Lower leg skin (tissue), 4 donors: ENCODE measurements at regions of chr6 and their contacts with region 1.

Region 1: DNA sequence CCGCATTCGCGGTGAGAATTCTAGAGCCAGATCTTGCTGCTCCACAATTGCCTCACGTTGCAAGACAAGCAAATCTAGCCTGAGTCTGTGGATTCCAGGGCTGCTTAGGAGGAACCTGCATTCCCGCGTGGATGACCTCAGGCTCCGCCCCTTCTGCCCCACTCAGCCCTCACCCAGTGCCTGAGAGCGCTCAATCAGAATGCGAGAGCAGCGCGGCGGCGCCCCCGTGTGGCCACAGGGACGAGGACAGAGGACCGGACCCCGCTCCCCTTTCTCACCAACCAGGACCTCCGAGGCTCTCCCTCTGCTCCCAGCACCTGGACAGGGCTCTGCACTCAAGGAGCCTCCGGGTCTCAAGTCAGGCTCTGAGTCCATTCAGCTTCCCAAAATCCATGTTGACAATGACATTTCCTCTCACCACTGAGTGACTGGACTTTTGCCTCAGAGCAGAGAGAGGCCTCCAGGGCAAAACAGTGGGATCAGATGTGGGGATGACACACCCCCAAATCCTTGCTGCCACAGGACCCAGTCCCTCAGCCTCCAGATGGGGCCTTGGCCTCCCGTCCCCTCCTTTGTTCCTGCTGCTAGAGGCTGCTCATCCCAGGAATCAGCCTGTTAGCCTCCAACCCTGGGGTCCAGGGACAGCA is 52.0 kb downstream of the RPP21 start:
- DNase-seq: peak; percentile 59 to 95
- H3K4me3 ChIP-seq: no peak overlapping the region
- CTCF ChIP-seq: peak in 1 of 3 donors; percentile 29
- POLR2A ChIP-seq: no peak

Region 2: DNA sequence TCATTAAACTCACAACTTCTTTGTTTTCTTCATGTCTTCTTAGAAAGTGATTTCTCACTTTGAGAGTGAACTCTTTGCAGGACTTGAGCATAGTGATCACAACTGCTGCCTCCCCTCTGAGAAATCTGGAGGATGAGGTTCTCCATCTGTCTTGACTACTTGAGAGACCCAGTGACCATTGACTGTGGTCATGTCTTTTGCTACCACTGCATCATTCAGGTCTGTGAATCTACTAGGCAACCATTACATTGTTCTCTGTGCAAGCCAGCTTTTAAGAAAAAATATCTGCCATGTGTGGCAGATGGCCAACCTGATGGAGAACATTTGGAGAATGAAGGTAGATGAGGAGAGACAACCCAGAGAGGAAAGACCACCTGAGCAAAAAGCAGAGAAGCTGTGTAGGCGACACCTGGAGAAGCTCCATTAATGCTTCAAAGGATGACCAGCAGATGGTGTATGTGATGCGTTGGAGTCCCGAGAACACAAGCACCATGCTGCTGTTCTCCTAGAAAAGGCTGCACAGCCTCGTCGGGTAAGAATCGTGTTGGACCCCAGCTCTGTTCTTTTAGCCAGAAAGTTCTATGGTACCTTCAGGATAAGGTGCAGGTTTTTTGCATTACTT is 158.7 kb before region 1 on chr6:
- intact Hi-C with region 1: loop called (anchors 10 kb)
- DNase-seq: no peak
- H3K4me3 ChIP-seq: no peak overlapping the region
- CTCF ChIP-seq: no peak
- POLR2A ChIP-seq: no peak